ENCODE measurements at regions of chr11 and their contacts with region 1.

Region 1: DNA sequence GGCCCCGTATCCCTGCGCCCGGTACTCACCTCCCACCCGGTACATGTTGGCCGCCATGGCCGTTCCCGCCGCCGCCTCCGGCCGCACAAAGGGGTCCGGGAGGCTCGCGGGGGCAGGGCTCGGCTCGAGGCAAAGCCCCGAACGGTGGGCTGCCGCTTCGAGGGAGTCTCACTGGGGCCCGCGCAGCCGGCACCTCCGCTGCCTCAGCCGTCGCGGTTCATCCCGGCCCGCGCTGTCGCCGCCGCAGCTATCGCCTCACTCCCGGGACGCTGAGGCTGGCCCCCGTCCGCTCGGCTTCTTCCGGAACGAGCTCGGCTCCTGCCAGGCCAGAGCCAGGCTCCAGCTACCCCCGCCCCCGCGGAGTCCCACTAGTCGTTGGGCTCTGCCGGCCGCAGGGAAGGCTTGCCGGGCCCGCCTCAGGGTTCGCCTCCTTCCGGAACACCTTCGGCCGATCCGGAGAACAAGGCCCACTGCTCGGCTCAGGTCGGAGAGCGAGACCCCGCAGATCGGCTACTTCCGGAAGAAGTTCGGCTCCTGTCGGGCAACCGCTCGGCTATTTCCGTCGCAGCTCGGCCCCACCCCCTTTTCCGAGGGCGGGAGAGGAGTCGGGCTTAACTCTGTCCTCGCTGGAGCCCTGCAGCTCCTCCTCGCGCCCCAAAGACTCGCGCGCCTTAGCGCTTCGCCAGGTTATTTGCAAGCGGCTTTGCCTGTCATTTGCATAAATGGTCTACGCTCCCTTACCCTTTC is at the start of gene MTA2:
- DNase-seq: peak; percentile 99
- ATAC-seq: peak; percentile 89
- H3K4me3 Mint-ChIP-seq: peak within 1 kb of the TSS; percentile 97
- H3K27ac Mint-ChIP-seq: peak within 1 kb of the TSS; percentile 94
- H3K4me1 Mint-ChIP-seq: peaks cover 54% of the 10 kb centered on the region
- H3K27me3 Mint-ChIP-seq: no peaks in the 10 kb centered on the region
- total RNA-seq, gene MTA2: 245 to 264 TPM

Region 2: DNA sequence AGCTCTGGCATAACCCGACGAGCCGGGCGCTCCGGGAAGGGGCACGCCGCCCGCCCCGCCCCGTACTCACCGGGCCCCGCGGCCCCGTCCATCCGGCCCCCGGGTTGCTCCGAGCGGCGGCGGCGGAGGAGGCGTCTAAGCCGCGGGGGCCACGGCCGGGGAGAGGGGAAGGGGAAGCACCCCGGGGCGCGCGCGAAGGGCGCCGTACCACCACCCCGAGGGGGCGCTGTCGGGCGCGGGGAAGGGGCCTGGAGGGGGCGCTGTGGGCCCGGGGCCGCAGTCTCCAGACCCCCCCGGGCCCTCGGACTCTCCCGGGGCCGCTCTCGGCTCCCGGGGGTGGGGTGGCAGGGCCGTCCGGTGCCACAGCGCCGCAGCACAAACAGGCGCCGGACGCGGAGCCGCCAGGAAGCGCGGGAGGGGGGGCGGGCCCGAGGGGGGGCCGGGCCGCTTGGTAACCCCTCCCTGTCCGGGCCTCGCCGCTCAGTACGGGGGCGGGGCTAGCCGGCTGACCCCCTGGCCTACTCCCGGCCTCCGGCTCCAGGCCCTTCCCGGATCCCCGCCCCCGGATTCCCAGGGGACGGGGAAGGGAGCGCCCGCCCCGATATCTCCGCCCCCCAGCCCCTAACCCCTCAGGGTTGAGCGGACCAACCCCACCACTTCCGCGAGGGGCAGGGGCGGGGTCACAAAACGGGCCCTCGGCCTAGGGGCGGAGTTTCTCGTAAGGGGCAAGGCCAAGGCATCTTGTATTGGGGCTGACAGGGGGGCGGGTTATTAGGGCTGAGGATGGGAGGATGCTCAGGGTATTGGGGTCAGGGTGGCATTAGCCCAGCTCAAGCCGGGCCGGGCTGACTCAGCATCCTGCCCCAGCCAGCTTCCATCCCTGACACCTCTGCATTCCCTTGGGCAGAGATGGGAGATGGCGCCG is 11.1 kb after region 1 on chr11 and contains the starts of genes EML3 and ROM1:
- CTCF ChIA-PET with region 1: interaction called, 54 read pairs
- DNase-seq: peak; percentile 95
- ATAC-seq: peak; percentile 83
- H3K4me3 Mint-ChIP-seq: peak within 1 kb of the TSS; percentile 100
- H3K27ac Mint-ChIP-seq: peak within 1 kb of the TSS; percentile 99
- H3K4me1 Mint-ChIP-seq: peaks cover 48% of the 10 kb centered on the region
- H3K27me3 Mint-ChIP-seq: no peaks in the 10 kb centered on the region
- total RNA-seq, gene EML3: 132 to 133 TPM
- total RNA-seq, gene ROM1: 1.1 to 1.5 TPM